IMR-90 (cell line): ENCODE measurements at regions of chr3 and their contacts with region 1.

Region 1: DNA sequence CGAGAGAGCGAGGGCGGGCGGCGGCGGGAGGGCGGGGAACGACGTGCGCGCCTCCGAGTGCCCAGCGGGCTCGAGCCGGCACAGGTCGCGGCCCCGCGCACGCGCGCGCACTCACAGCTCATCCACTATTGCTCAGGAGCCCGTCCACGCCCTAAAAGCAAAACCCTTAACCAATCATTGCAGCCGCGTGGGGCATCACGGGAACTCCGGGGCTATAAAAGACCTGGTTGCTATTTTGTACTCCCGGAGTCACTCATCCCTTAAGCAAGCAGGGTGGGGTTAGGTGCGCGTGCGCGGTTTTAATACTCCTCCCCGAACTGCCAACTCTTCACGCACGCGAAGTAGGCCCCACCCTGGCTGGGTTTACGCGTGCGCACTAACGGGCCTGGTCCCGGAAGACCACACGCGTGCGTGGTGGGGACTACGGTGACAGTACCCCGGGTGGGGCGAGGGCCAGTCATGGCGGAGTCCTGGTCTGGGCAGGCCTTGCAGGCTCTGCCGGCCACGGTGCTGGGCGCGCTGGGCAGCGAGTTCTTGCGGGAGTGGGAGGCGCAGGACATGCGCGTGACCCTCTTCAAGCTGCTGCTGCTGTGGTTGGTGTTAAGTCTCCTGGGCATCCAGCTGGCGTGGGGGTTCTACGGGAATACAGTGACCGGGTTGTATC is at the starts of genes RHOA and TCTA:
- DNase-seq: peak; percentile 100
- ATAC-seq: peak; percentile 91
- H3K4me3 ChIP-seq: peak within 1 kb of the TSS; percentile 78
- H3K27ac ChIP-seq: peak within 1 kb of the TSS; percentile 96
- H3K4me1 ChIP-seq: peaks cover 9% of the 10 kb centered on the region
- H3K27me3 ChIP-seq: no peaks in the 10 kb centered on the region
- CTCF ChIP-seq: no peak
- POLR2A ChIP-seq: peak; percentile 97
- RAD21 ChIP-seq: no peak
- total RNA-seq, gene RHOA: 879 and 897 TPM in 2 replicates
- total RNA-seq, gene TCTA: 12.8 and 15.1 TPM in 2 replicates

Region 2: DNA sequence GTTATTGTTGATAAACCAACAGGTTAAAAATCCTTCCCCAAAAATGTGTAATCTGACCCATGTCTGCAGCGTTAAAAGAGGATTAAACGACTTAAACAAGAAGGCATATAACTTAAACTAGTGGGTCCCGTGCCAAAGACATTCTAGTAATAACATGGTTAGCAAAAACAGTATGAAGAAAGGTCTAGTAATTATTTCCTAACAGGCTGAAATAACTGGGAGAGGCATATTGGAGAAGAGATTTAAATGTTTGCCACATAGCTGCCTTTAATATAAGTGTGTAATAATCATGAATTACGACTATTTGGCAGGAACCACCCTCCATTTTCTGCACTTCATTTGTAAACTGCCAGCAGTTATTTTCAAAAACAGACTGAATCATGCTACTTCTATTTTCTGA is 1765.7 kb before region 1 on chr3:
- CTCF ChIA-PET with region 1: no interaction called
- POLR2A ChIA-PET with region 1: no interaction called
- dilution Hi-C with region 1: no loop called
- in situ Hi-C with region 1: no loop called
- intact Hi-C with region 1: no loop called
- DNase-seq: peak; percentile 34
- ATAC-seq: peak; percentile 40
- H3K4me3 ChIP-seq: no peak overlapping the region
- H3K27ac ChIP-seq: no peak overlapping the region; the same call in 1 of the 2 replicates
- H3K4me1 ChIP-seq: no peaks in the 10 kb centered on the region; the same call in none of the 2 replicates
- H3K27me3 ChIP-seq: no peaks in the 10 kb centered on the region
- CTCF ChIP-seq: no peak
- POLR2A ChIP-seq: no peak
- RAD21 ChIP-seq: no peak

Region 3: GRCh38 chr3:49266410-49267095 is 145.5 kb before region 1 on chr3:
- CTCF ChIA-PET with region 1: no interaction called
- POLR2A ChIA-PET with region 1: no interaction called
- dilution Hi-C with region 1: no loop called
- in situ Hi-C with region 1: no loop called
- intact Hi-C with region 1: no loop called
- DNase-seq: no peak
- ATAC-seq: no peak
- H3K4me3 ChIP-seq: no peak overlapping the region
- H3K27ac ChIP-seq: no peak overlapping the region
- H3K4me1 ChIP-seq: no peaks in the 10 kb centered on the region; the same call in 1 of the 2 replicates
- H3K27me3 ChIP-seq: no peaks in the 10 kb centered on the region
- CTCF ChIP-seq: no peak
- POLR2A ChIP-seq: no peak
- RAD21 ChIP-seq: no peak

Region 4: DNA sequence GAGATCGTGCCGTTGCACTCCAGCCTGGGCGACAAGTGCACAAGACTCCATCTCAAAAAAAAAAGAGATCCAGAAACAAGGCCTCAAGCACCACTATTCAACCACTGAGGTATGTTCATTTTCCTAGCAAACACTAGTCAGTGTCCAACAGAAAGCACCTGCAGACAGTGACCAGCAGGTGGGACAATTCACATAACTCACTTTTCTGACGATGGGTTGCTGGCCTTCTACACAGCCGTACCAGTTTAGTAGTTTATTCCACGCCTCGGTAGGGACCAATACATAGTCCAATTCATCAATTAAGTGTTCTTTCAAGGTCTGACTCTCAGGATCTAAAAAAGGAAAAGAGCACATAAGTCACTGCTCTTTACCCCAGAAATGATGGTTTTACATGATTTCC is 84.6 kb before region 1 on chr3:
- CTCF ChIA-PET with region 1: no interaction called
- POLR2A ChIA-PET with region 1: no interaction called
- dilution Hi-C with region 1: no loop called
- in situ Hi-C with region 1: no loop called
- intact Hi-C with region 1: no loop called
- DNase-seq: no peak
- ATAC-seq: no peak
- H3K4me3 ChIP-seq: no peak overlapping the region
- H3K27ac ChIP-seq: no peak overlapping the region
- H3K4me1 ChIP-seq: no peaks in the 10 kb centered on the region
- H3K27me3 ChIP-seq: no peaks in the 10 kb centered on the region
- CTCF ChIP-seq: no peak; the same call in 1 of the 2 replicates
- POLR2A ChIP-seq: no peak
- RAD21 ChIP-seq: peak; percentile 24

Region 5: GRCh38 chr3:49351521-49352011 is 60.5 kb before region 1 on chr3:
- CTCF ChIA-PET with region 1: no interaction called
- POLR2A ChIA-PET with region 1: interaction called, 3 read pairs
- dilution Hi-C with region 1: no loop called
- in situ Hi-C with region 1: loop called (anchors 5 kb)
- intact Hi-C with region 1: no loop called
- DNase-seq: peak; percentile 94
- ATAC-seq: peak; percentile 88
- H3K4me3 ChIP-seq: no peak overlapping the region
- H3K27ac ChIP-seq: peak overlapping the region; percentile 88
- H3K4me1 ChIP-seq: peaks cover 20% of the 10 kb centered on the region
- H3K27me3 ChIP-seq: no peaks in the 10 kb centered on the region
- CTCF ChIP-seq: no peak
- POLR2A ChIP-seq: no peak
- RAD21 ChIP-seq: peak; percentile 8; the same call in 1 of the 2 replicates

Region 6: GRCh38 chr3:49358217-49358883 is 53.8 kb before region 1 on chr3 and contains the start of gene GPX1:
- CTCF ChIA-PET with region 1: no interaction called
- POLR2A ChIA-PET with region 1: no interaction called
- dilution Hi-C with region 1: no loop called
- in situ Hi-C with region 1: loop called (anchors 5 kb)
- intact Hi-C with region 1: loop called (anchors 2 kb)
- DNase-seq: peak; percentile 94
- ATAC-seq: peak; percentile 83
- H3K4me3 ChIP-seq: peak within 1 kb of the TSS; percentile 67
- H3K27ac ChIP-seq: peak within 1 kb of the TSS; percentile 99
- H3K4me1 ChIP-seq: peaks cover 24% of the 10 kb centered on the region
- H3K27me3 ChIP-seq: no peaks in the 10 kb centered on the region
- CTCF ChIP-seq: no peak
- POLR2A ChIP-seq: peak; percentile 88
- RAD21 ChIP-seq: no peak
- total RNA-seq, gene GPX1: 126 and 128 TPM in 2 replicates

Region 7: GRCh38 chr3:49389297-49389696 is 22.8 kb before region 1 on chr3:
- CTCF ChIA-PET with region 1: no interaction called
- POLR2A ChIA-PET with region 1: no interaction called
- dilution Hi-C with region 1: no loop called
- in situ Hi-C with region 1: no loop called
- intact Hi-C with region 1: no loop called
- DNase-seq: no peak
- ATAC-seq: no peak
- H3K4me3 ChIP-seq: no peak overlapping the region
- H3K27ac ChIP-seq: no peak overlapping the region
- H3K4me1 ChIP-seq: peaks cover 7% of the 10 kb centered on the region
- H3K27me3 ChIP-seq: no peaks in the 10 kb centered on the region
- CTCF ChIP-seq: no peak
- POLR2A ChIP-seq: no peak
- RAD21 ChIP-seq: no peak

Region 8: GRCh38 chr3:49673715-49674496 is 261.8 kb after region 1 on chr3 and contains the start of gene APEH:
- CTCF ChIA-PET with region 1: no interaction called
- POLR2A ChIA-PET with region 1: no interaction called
- dilution Hi-C with region 1: no loop called
- in situ Hi-C with region 1: no loop called
- intact Hi-C with region 1: loop called (anchors 5 kb)
- DNase-seq: peak; percentile 96
- ATAC-seq: peak; percentile 93
- H3K4me3 ChIP-seq: peak within 1 kb of the TSS; percentile 86
- H3K27ac ChIP-seq: peak within 1 kb of the TSS; percentile 90
- H3K4me1 ChIP-seq: peaks cover 9% of the 10 kb centered on the region
- H3K27me3 ChIP-seq: no peaks in the 10 kb centered on the region
- CTCF ChIP-seq: no peak
- POLR2A ChIP-seq: peak; percentile 82
- RAD21 ChIP-seq: no peak
- total RNA-seq, gene APEH: 116 and 142 TPM in 2 replicates